AG04450 (cell line): ENCODE measurements at regions of chr12 and their contacts with region 1.

Region 1: GRCh38 chr12:55658635-55659391 is 22.1 kb downstream of the OR10P1 start:
- DNase-seq: no peak
- H3K4me3 ChIP-seq: no peak overlapping the region
- H3K27ac ChIP-seq: no peak overlapping the region
- H3K27me3 ChIP-seq: peaks cover 28% of the 10 kb centered on the region
- CTCF ChIP-seq: no peak

Region 2: GRCh38 chr12:55188974-55189556 is 469.7 kb before region 1 on chr12:
- CTCF ChIA-PET with region 1: interaction called, 22 read pairs
- POLR2A ChIA-PET with region 1: no interaction called
- DNase-seq: peak; percentile 48
- H3K4me3 ChIP-seq: no peak overlapping the region
- H3K27ac ChIP-seq: no peak overlapping the region
- H3K27me3 ChIP-seq: no peaks in the 10 kb centered on the region
- CTCF ChIP-seq: peak; percentile 76

Region 3: DNA sequence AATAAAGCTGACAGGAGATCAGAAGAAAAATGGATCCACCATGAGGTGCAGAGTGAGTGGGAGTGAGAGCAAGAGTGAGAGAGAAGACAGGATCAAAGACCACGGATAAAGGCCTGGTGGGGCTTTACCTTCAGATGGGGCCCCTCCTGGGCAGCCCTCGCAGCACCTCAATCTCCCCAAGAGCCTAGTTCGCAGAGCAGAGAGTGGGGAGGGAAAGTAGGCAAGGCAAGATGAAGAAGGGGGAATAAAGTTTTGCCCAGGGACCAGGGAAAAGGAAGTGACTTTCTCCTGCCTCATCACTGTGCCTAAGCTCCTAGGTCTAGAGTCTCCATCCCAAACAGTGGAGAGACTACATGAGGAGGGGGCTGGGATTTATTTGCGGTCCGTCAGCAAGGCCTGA is 11.8 kb before region 1 on chr12:
- CTCF ChIA-PET with region 1: interaction called, 44 read pairs
- POLR2A ChIA-PET with region 1: no interaction called
- DNase-seq: no peak
- H3K4me3 ChIP-seq: no peak overlapping the region
- H3K27ac ChIP-seq: no peak overlapping the region
- H3K27me3 ChIP-seq: peaks cover 8% of the 10 kb centered on the region
- CTCF ChIP-seq: no peak

Region 4: DNA sequence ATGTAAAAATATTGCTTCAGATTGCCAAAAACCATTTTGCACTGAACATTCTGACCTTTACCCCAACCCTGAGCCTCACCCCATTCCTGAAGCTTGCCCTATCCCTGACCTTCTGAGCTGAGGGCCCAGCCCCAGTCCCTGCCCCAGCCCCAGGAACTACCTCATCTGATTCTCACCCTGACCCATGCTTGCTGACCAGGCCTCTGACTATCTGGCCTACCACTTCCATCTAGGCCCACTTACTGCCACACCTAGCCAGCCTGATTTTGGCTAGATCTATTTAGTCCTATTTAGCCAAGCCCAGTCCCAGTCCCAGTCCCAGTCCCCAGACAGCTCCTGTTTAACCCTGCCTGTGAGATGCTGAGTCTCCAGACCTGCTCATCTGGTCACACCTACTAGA is 11.5 kb after region 1 on chr12:
- CTCF ChIA-PET with region 1: interaction called, 14 read pairs
- POLR2A ChIA-PET with region 1: no interaction called
- DNase-seq: no peak
- H3K4me3 ChIP-seq: no peak overlapping the region
- H3K27ac ChIP-seq: no peak overlapping the region
- H3K27me3 ChIP-seq: peaks cover 8% of the 10 kb centered on the region
- CTCF ChIP-seq: no peak

Region 5: DNA sequence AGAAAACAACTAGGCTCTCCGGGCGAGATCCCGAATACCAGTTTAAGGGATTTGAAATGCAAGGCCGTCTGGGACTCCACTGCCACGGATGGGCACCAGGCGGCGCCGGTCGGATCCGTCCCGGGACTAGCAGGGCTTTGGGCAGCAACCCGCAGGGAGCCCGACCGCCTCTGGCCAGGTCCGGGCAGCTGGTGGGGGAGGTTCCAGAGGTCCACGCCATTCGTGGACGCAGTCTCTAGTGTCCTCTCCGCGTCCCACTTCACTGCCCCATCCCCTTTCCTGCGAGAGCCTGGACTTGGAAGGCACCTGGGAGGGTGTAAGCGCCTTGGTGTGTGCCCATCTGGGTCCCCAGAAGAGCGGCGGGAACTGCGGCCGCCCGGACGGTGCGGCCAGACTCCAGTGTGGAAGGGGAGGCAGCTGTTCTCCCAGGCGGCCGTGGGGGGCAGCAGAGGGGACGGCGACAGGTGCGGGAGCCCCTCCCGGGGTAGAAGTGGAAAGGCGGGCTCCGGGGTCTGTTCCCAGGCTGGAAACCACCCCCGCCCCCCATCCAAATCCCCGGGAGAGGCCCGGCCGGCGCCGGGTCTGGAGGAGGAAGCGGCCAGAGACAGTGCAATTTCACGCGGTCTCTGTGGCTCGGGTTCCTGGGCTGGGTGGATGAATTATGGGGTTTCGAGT is 420.3 kb after region 1 on chr12:
- CTCF ChIA-PET with region 1: no interaction called
- POLR2A ChIA-PET with region 1: no interaction called
- DNase-seq: peak; percentile 44
- H3K4me3 ChIP-seq: peak overlapping the region; percentile 69
- H3K27ac ChIP-seq: no peak overlapping the region
- H3K27me3 ChIP-seq: peaks cover 37% of the 10 kb centered on the region
- CTCF ChIP-seq: peak; percentile 80